Right cardiac atrium (tissue), 5 donors: ENCODE measurements at regions of chr11 and their contacts with region 1.

Region 1: GRCh38 chr11:123301696-123302400 is 106.8 kb upstream of the CLMP start:
- DNase-seq: peak; percentile 53 to 84 (median 82)
- ATAC-seq: peak; percentile 89 to 92
- H3K4me3 ChIP-seq: peak overlapping the region; percentile 26
- H3K27ac ChIP-seq: no peak overlapping the region
- H3K4me1 ChIP-seq: no peaks in the 10 kb centered on the region
- H3K27me3 ChIP-seq: no peaks in the 10 kb centered on the region

Region 2: GRCh38 chr11:123357961-123358841 is 56.4 kb after region 1 on chr11:
- intact Hi-C with region 1: loop called in 1 of 4 experiments (anchors 10 kb)
- DNase-seq: peak; percentile 18 to 47 (median 44)
- ATAC-seq: peak; percentile 59 to 69
- H3K4me3 ChIP-seq: peak overlapping the region; percentile 46
- H3K27ac ChIP-seq: no peak overlapping the region
- H3K4me1 ChIP-seq: no peaks in the 10 kb centered on the region
- H3K27me3 ChIP-seq: no peaks in the 10 kb centered on the region

Region 3: DNA sequence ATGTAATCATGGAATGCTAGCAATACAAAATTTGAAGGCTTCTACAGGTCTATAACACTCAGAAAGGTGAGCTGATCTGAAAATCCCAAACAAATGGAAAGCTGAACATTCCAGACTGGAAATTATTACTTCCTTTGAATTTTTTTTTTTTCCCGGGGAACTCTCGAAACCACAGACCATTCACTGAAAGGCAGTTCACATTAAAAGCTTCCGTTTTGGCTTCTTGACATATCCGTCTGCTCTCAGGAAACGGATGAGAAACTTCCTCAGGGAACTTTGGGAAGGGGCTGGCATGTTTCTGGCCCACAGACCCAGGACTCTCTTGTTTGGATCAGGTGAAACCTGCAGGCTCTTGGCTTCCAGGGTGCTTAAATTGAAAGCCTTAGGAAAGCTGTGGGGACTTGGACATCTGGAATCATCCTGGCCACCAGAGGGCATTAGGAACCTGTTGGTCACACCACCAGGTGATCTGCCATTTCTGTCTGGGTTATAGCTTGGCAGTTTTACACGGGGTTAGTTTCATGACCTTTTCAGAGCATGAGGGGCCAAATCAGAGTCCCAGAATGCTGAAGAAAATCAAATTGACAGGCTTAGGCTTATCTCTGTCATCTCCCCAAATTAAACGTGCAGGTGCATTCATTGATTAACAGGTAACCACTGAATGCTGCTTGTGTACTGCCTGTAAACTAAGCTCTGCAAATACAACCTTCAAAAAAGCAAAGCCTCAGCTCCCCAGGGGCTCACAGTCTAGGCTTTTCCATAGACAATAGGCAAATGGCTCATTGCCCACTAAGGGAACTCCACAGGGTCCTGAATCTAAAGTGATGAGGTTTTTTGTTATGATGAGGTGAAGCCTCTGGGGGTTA is 105.5 kb after region 1 on chr11:
- intact Hi-C with region 1: loop called in 3 of 4 experiments (anchors 5 to 10 kb)
- DNase-seq: peak; percentile 49 to 67 (median 51)
- ATAC-seq: peak; percentile 61 to 68
- H3K4me3 ChIP-seq: no peak overlapping the region
- H3K27ac ChIP-seq: no peak overlapping the region
- H3K4me1 ChIP-seq: peaks cover 2% of the 10 kb centered on the region
- H3K27me3 ChIP-seq: no peaks in the 10 kb centered on the region